GM12878 (cell line): ENCODE measurements at regions of chr11 and their contacts with region 1.

Region 1: GRCh38 chr11:58579192-58580129 is 598 bp downstream of the ZFP91 start:
- DNase-seq: no peak
- ATAC-seq: peak; percentile 52
- H3K4me3 ChIP-seq: peak overlapping the region; percentile 82
- H3K27ac ChIP-seq: peak overlapping the region; percentile 98
- H3K4me1 ChIP-seq: peaks cover 12% of the 10 kb centered on the region
- H3K27me3 ChIP-seq: no peaks in the 10 kb centered on the region
- CTCF ChIP-seq: peak; percentile 78 to 86 (median 84)
- EP300 ChIP-seq: peak in 1 of 2 experiments; percentile 55; a peak in 1 of 4 replicates
- POLR2A ChIP-seq: peak; percentile 79
- RAD21 ChIP-seq: peak; percentile 24; the same call in 1 of the 2 replicates

Region 2: GRCh38 chr11:58524232-58525036 is 55.0 kb before region 1 on chr11:
- CTCF ChIA-PET with region 1: interaction called, 20 read pairs
- POLR2A ChIA-PET with region 1: interaction called, 3 read pairs
- RAD21 ChIA-PET with region 1: interaction called, 5 read pairs
- SMC1A ChIA-PET with region 1: interaction called, 3 read pairs
- in situ Hi-C with region 1: no loop called
- intact Hi-C with region 1: no loop called
- DNase-seq: peak; percentile 39
- ATAC-seq: peak; percentile 68
- H3K4me3 ChIP-seq: peak overlapping the region; percentile 49; the same call in 1 of the 2 replicates
- H3K27ac ChIP-seq: peak overlapping the region; percentile 75
- H3K4me1 ChIP-seq: peaks cover 30% of the 10 kb centered on the region
- H3K27me3 ChIP-seq: no peaks in the 10 kb centered on the region
- CTCF ChIP-seq: peak; percentile 70 to 77 (median 72)
- EP300 ChIP-seq: no peak
- POLR2A ChIP-seq: peak; percentile 21; the same call in 1 of the 2 replicates
- RAD21 ChIP-seq: peak; percentile 72

Region 3: GRCh38 chr11:58629857-58630256 is 50.4 kb after region 1 on chr11:
- CTCF ChIA-PET with region 1: interaction called, 110 read pairs
- POLR2A ChIA-PET with region 1: interaction called, 11 read pairs
- RAD21 ChIA-PET with region 1: interaction called, 28 read pairs
- SMC1A ChIA-PET with region 1: interaction called, 45 read pairs
- in situ Hi-C with region 1: no loop called
- intact Hi-C with region 1: no loop called
- DNase-seq: no peak
- ATAC-seq: peak; percentile 86
- H3K4me3 ChIP-seq: no peak overlapping the region
- H3K27ac ChIP-seq: no peak overlapping the region
- H3K4me1 ChIP-seq: no peaks in the 10 kb centered on the region
- H3K27me3 ChIP-seq: no peaks in the 10 kb centered on the region
- CTCF ChIP-seq: peak; percentile 59 to 70 (median 66)
- EP300 ChIP-seq: no peak
- POLR2A ChIP-seq: no peak
- RAD21 ChIP-seq: peak; percentile 72

Region 4: DNA sequence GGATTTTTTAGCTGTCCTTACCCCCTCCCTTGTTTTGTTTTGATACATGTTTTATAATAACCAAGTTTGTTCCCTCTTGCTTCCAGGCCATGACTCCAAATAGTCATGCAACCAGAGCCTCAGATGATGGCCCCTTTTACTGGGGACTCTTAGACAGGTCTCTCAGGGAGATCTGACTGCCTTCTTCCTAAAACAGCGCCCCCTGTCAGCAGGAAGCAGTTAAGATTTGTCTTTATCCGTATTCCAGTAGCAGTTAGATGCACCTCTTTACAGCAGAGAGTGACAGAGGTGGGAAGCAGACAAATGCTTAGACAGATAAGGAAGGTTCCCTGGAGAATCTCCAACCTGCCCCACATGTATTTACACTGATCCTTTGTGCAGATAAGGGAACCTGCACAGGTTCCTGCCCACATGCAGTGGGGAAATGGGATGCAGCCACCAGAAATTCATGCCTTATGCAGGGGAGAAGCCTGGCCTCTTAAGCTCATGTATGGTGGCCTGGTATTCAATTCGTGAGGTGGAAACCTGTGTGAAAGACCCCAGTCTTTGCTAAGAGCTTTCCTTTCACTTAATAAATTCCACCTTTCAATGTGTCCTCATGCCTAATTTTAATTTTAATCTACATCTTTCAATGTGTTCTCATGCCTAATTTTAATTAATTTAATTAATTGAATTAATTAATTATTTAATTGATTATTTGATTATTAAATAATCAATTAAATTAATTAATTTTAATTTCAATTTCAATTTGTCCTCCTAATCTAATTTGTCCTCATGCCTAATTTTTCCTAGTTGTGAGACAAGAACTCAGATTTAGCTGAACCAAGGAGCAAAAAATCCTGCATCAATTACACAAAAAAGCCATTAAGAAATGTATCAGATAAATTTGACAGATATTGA is 163.8 kb after region 1 on chr11:
- CTCF ChIA-PET with region 1: no interaction called
- POLR2A ChIA-PET with region 1: no interaction called
- RAD21 ChIA-PET with region 1: no interaction called
- SMC1A ChIA-PET with region 1: no interaction called
- in situ Hi-C with region 1: no loop called
- intact Hi-C with region 1: no loop called
- DNase-seq: no peak
- ATAC-seq: no peak; the same call in 2 of the 3 replicates
- H3K4me3 ChIP-seq: no peak overlapping the region
- H3K27ac ChIP-seq: no peak overlapping the region
- H3K4me1 ChIP-seq: no peaks in the 10 kb centered on the region
- H3K27me3 ChIP-seq: no peaks in the 10 kb centered on the region
- CTCF ChIP-seq: peak in 2 of 3 experiments; percentile 19 to 32; a peak in 1 of 6 replicates
- EP300 ChIP-seq: no peak
- POLR2A ChIP-seq: no peak
- RAD21 ChIP-seq: no peak

Region 5: GRCh38 chr11:58788355-58789023 is 209.0 kb after region 1 on chr11:
- CTCF ChIA-PET with region 1: interaction called, 14 read pairs
- POLR2A ChIA-PET with region 1: no interaction called
- RAD21 ChIA-PET with region 1: interaction called, 4 read pairs
- SMC1A ChIA-PET with region 1: interaction called, 5 read pairs
- in situ Hi-C with region 1: no loop called
- intact Hi-C with region 1: loop called (anchors 5 kb)
- DNase-seq: peak; percentile 7
- ATAC-seq: peak; percentile 98
- H3K4me3 ChIP-seq: no peak overlapping the region
- H3K27ac ChIP-seq: no peak overlapping the region
- H3K4me1 ChIP-seq: no peaks in the 10 kb centered on the region
- H3K27me3 ChIP-seq: no peaks in the 10 kb centered on the region; a peak in 1 of 4 replicates
- CTCF ChIP-seq: peak; percentile 88 to 94 (median 88); a peak in 5 of 6 replicates
- EP300 ChIP-seq: no peak
- POLR2A ChIP-seq: no peak
- RAD21 ChIP-seq: peak; percentile 94

Region 6: GRCh38 chr11:59216641-59217564 is 637.4 kb after region 1 on chr11:
- CTCF ChIA-PET with region 1: no interaction called
- POLR2A ChIA-PET with region 1: no interaction called
- RAD21 ChIA-PET with region 1: no interaction called
- SMC1A ChIA-PET with region 1: no interaction called
- in situ Hi-C with region 1: no loop called
- intact Hi-C with region 1: loop called (anchors 2 kb)
- DNase-seq: peak; percentile 99
- ATAC-seq: peak; percentile 88
- H3K4me3 ChIP-seq: no peak overlapping the region
- H3K27ac ChIP-seq: peak overlapping the region; percentile 91
- H3K4me1 ChIP-seq: peaks cover 76% of the 10 kb centered on the region
- H3K27me3 ChIP-seq: no peaks in the 10 kb centered on the region
- CTCF ChIP-seq: no peak
- EP300 ChIP-seq: peak; percentile 99 to 100
- POLR2A ChIP-seq: no peak
- RAD21 ChIP-seq: peak; percentile 40

Region 7: DNA sequence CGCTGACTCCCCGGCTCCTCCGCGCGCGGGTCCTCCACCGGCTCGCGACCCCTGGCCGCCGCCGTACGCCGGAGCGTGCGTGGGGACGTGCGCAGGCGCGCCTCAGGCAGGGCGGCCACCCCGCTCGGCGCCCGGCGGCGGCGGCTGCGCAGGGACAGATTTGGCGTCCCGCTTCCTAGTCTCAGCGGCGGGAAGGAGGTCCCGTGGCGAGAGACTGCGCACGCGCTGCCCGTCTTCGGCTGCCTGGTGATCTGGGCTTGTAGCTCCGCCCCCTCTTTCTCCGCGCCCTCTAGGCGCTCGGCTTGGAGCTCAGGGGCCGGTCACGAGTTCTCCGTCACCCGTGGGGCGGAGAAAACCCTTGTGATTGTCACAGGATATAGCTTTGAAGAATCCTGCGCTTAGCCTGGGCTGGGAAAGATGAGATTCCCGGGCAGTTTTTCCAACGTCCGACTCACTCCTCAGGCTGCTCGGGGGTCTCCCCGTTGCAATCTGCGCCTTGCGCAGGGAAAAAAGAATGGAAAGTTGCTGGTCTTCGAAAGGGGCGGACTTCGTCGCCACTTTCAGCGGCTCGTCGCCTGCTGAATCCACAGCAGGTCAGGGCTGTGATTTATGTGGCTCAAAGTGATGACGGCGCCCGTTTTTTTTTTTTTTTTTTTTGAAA is 1089.6 kb after region 1 on chr11 and contains the start of gene PATL1:
- CTCF ChIA-PET with region 1: no interaction called
- POLR2A ChIA-PET with region 1: no interaction called
- RAD21 ChIA-PET with region 1: no interaction called
- SMC1A ChIA-PET with region 1: no interaction called
- in situ Hi-C with region 1: loop called (anchors 25 kb)
- intact Hi-C with region 1: no loop called
- DNase-seq: peak; percentile 94
- ATAC-seq: peak; percentile 95
- H3K4me3 ChIP-seq: peak within 1 kb of the TSS; percentile 98
- H3K27ac ChIP-seq: peak within 1 kb of the TSS; percentile 86
- H3K4me1 ChIP-seq: no peaks in the 10 kb centered on the region; the same call in 1 of the 2 replicates
- H3K27me3 ChIP-seq: no peaks in the 10 kb centered on the region
- CTCF ChIP-seq: no peak
- EP300 ChIP-seq: peak; percentile 10 to 45; a peak in 2 of 4 replicates
- POLR2A ChIP-seq: peak; percentile 81
- RAD21 ChIP-seq: no peak
- polyA plus RNA-seq, gene PATL1: 5.3 to 5.9 TPM